MCF 10A (cell line): ENCODE measurements at regions of chr5 and their contacts with region 1.

Region 1: GRCh38 chr5:176817841-176818377 is 7.5 kb downstream of the UNC5A start:
- DNase-seq: no peak
- H3K4me3 Mint-ChIP-seq: peak overlapping the region; percentile 35
- H3K27ac Mint-ChIP-seq: no peak overlapping the region
- H3K4me1 Mint-ChIP-seq: peaks cover 12% of the 10 kb centered on the region
- H3K27me3 Mint-ChIP-seq: peaks cover 10% of the 10 kb centered on the region
- CTCF ChIP-seq: peak; percentile 24

Region 2: GRCh38 chr5:176959051-176959450 is 141.1 kb after region 1 on chr5:
- CTCF ChIA-PET with region 1: no interaction called
- POLR2A ChIA-PET with region 1: no interaction called
- intact Hi-C with region 1: loop called (anchors 10 kb)
- DNase-seq: peak; percentile 45
- H3K4me3 Mint-ChIP-seq: no peak overlapping the region
- H3K27ac Mint-ChIP-seq: no peak overlapping the region
- H3K4me1 Mint-ChIP-seq: peaks cover 23% of the 10 kb centered on the region
- H3K27me3 Mint-ChIP-seq: no peaks in the 10 kb centered on the region
- CTCF ChIP-seq: peak; percentile 45